ENCODE measurements at regions of chr11 and their contacts with region 1.

Region 1: DNA sequence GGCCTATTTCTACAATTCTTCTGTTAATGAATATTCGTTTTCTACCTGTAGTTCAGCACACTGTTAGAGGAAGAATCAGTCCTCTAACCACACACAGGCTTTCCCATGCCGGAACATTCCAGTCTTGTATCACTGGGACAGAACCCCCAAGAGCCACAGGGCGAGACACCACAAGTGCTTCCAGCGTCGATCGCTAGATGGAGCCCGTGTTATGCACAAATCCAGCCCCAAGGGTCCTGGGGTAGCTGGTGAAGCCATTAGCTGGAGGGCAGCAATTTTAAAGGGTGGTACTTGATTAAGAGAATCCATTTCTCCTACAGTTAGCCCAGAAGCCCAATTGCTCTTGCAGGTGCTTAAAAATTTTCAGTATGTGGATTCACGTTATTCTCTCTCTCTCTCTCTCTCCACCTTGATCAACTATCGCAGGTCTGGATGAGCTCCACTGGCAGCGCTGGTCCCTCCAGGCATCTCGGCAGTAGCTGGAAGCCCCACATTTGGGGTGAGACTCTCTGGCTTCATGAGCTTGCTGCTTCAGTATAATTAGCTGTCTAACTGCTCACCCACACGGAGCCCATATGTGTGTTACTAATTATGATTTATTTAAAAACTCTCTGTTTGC is 148.2 kb upstream of the SNX19 start:
- DNase-seq: peak; percentile 91
- ATAC-seq: peak; percentile 96
- H3K4me3 Mint-ChIP-seq: no peak overlapping the region
- H3K27ac Mint-ChIP-seq: no peak overlapping the region
- H3K4me1 Mint-ChIP-seq: peaks cover 43% of the 10 kb centered on the region
- H3K27me3 Mint-ChIP-seq: 0 out of 2 replicates have a peak, but pooled peaks cover 3% of the 10 kb centered on the region
- CTCF ChIP-seq: peak; percentile 63

Region 2: DNA sequence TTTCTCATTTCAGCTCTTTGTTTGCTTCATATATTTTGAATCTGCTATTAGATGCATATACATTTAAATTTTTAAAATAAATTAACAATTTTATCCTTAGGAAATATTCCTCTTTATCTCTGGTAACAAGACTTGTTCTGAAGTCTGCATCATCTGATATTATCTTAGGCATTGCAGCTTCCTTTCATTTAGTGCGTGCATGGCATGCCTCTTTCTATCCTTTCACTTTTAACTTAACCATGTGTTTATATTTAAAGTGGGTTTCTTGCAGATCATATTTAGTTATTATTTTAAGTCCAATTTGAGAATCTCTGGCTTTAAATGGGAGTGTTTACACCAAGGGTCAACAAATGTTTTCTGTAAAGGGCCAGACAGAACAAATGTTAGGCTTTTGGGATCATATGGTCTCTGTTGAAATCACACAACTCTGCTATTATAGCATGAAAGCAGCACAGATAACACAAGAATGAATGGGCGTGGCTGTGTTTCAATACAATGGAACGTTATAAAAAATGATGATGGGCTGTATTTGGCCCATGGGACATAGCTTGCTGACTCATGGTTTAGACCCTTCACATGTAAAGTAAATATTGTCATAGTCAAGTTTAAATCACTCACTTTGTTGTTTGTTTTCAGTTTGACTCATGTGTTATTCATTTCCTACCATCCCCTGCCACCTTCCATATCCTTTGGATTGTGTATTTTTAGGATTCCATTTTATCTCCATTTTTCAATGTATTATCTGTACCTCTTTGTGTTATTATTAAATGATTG is 64.3 kb before region 1 on chr11:
- CTCF ChIA-PET with region 1: no interaction called
- POLR2A ChIA-PET with region 1: no interaction called
- DNase-seq: no peak
- ATAC-seq: no peak
- H3K4me3 Mint-ChIP-seq: no peak overlapping the region
- H3K27ac Mint-ChIP-seq: no peak overlapping the region
- H3K4me1 Mint-ChIP-seq: no peaks in the 10 kb centered on the region
- H3K27me3 Mint-ChIP-seq: peaks cover 2% of the 10 kb centered on the region
- CTCF ChIP-seq: no peak

Region 3: DNA sequence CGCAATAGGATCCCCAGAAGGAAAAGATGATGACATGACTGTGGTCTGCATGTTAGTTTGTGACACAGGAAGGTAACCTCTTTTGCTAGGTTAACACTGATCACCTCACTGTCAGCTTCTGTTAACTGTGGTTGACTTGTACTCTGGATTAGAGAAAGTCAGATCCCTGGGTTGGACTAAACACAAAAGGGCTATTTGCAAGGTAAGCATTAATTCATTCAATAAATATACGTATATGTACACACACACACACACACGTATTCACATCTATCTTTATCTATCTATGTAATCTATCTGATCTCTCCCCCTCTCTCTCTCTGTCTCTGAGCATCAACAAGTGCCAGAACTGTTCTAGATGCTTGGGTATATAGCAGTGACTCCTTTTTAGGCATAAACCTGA is 12.1 kb before region 1 on chr11:
- CTCF ChIA-PET with region 1: interaction called, 22 read pairs
- POLR2A ChIA-PET with region 1: no interaction called
- DNase-seq: no peak
- ATAC-seq: no peak
- H3K4me3 Mint-ChIP-seq: no peak overlapping the region
- H3K27ac Mint-ChIP-seq: no peak overlapping the region
- H3K4me1 Mint-ChIP-seq: peaks cover 28% of the 10 kb centered on the region
- H3K27me3 Mint-ChIP-seq: peaks cover 6% of the 10 kb centered on the region
- CTCF ChIP-seq: no peak

Region 4: GRCh38 chr11:131223198-131223991 is 158.9 kb after region 1 on chr11:
- CTCF ChIA-PET with region 1: interaction called, 31 read pairs
- POLR2A ChIA-PET with region 1: no interaction called
- DNase-seq: no peak
- ATAC-seq: peak; percentile 79
- H3K4me3 Mint-ChIP-seq: no peak overlapping the region
- H3K27ac Mint-ChIP-seq: peak overlapping the region; percentile 69
- H3K4me1 Mint-ChIP-seq: peaks cover 54% of the 10 kb centered on the region
- H3K27me3 Mint-ChIP-seq: no peaks in the 10 kb centered on the region; the same call in 1 of the 2 replicates
- CTCF ChIP-seq: no peak

Region 5: GRCh38 chr11:131284031-131284430 is 219.5 kb after region 1 on chr11:
- CTCF ChIA-PET with region 1: interaction called, 12 read pairs
- POLR2A ChIA-PET with region 1: interaction called, 5 read pairs
- DNase-seq: no peak
- ATAC-seq: peak; percentile 16; the same call in 1 of the 2 replicates
- H3K4me3 Mint-ChIP-seq: no peak overlapping the region
- H3K27ac Mint-ChIP-seq: no peak overlapping the region
- H3K4me1 Mint-ChIP-seq: peaks cover 45% of the 10 kb centered on the region
- H3K27me3 Mint-ChIP-seq: no peaks in the 10 kb centered on the region
- CTCF ChIP-seq: no peak

Region 6: GRCh38 chr11:131392528-131393255 is 328.2 kb after region 1 on chr11:
- CTCF ChIA-PET with region 1: interaction called, 10 read pairs
- POLR2A ChIA-PET with region 1: no interaction called
- DNase-seq: peak; percentile 46
- ATAC-seq: peak; percentile 95
- H3K4me3 Mint-ChIP-seq: no peak overlapping the region
- H3K27ac Mint-ChIP-seq: no peak overlapping the region
- H3K4me1 Mint-ChIP-seq: peaks cover 31% of the 10 kb centered on the region
- H3K27me3 Mint-ChIP-seq: peaks cover 3% of the 10 kb centered on the region; the same call in 1 of the 2 replicates
- CTCF ChIP-seq: no peak

Region 7: GRCh38 chr11:131495423-131495822 is 430.9 kb after region 1 on chr11:
- CTCF ChIA-PET with region 1: interaction called, 11 read pairs
- POLR2A ChIA-PET with region 1: no interaction called
- DNase-seq: no peak
- ATAC-seq: no peak
- H3K4me3 Mint-ChIP-seq: no peak overlapping the region
- H3K27ac Mint-ChIP-seq: 0 out of 2 replicates have a peak overlapping the region, but pooled peaks have one; percentile 17
- H3K4me1 Mint-ChIP-seq: peaks cover 7% of the 10 kb centered on the region
- H3K27me3 Mint-ChIP-seq: no peaks in the 10 kb centered on the region
- CTCF ChIP-seq: no peak

Region 8: GRCh38 chr11:131584785-131585592 is 520.5 kb after region 1 on chr11:
- CTCF ChIA-PET with region 1: interaction called, 18 read pairs
- POLR2A ChIA-PET with region 1: interaction called, 3 read pairs
- DNase-seq: peak; percentile 82
- ATAC-seq: peak; percentile 95
- H3K4me3 Mint-ChIP-seq: no peak overlapping the region
- H3K27ac Mint-ChIP-seq: peak overlapping the region; percentile 39; the same call in 1 of the 2 replicates
- H3K4me1 Mint-ChIP-seq: peaks cover 52% of the 10 kb centered on the region
- H3K27me3 Mint-ChIP-seq: no peaks in the 10 kb centered on the region; the same call in 1 of the 2 replicates
- CTCF ChIP-seq: peak; percentile 70

Measured in WTC11 (cell line).